CD8-positive, alpha-beta T cell (primary cell): ENCODE measurements at regions of chr7 and their contacts with region 1.

Region 1: GRCh38 chr7:50418086-50418515 is 32.0 kb downstream of the FIGNL1 start:
- DNase-seq: peak; percentile 43 to 85 (median 67)
- ATAC-seq: peak; percentile 97
- H3K4me3 ChIP-seq: no peak overlapping the region
- H3K4me3 Mint-ChIP-seq: no peak overlapping the region
- H3K27ac ChIP-seq: no peak overlapping the region
- H3K27ac Mint-ChIP-seq: no peak overlapping the region
- H3K4me1 ChIP-seq: peaks cover 20% of the 10 kb centered on the region
- H3K4me1 Mint-ChIP-seq: peaks cover 24% of the 10 kb centered on the region
- H3K27me3 ChIP-seq: no peaks in the 10 kb centered on the region
- H3K27me3 Mint-ChIP-seq: no peaks in the 10 kb centered on the region
- CTCF ChIP-seq: peak; percentile 73

Region 2: DNA sequence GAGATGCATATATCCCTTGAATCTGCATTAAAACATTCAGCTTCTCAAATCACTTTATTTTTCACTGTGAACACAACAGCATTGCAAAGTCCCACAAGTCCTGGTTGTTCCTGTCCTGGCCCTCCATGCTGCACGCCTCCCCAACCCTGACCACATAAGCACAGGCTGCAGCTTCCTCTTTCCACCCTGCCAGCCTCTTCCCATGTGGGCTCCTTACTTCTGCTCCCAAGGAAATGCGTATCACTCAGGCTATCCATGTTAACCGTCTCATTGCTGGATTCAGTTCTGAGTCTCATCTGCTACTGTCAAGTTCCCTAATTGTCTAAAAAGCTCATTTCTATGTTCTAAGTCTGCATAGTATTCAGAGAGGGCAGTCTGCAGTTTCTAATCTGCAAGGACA is 235.3 kb before region 1 on chr7:
- CTCF ChIA-PET with region 1: interaction called, 12 read pairs
- POLR2A ChIA-PET with region 1: no interaction called
- intact Hi-C with region 1: no loop called
- DNase-seq: no peak
- ATAC-seq: no peak
- H3K4me3 ChIP-seq: no peak overlapping the region
- H3K4me3 Mint-ChIP-seq: no peak overlapping the region
- H3K27ac ChIP-seq: no peak overlapping the region
- H3K27ac Mint-ChIP-seq: no peak overlapping the region
- H3K4me1 ChIP-seq: no peaks in the 10 kb centered on the region
- H3K4me1 Mint-ChIP-seq: peaks cover 5% of the 10 kb centered on the region
- H3K27me3 ChIP-seq: no peaks in the 10 kb centered on the region
- H3K27me3 Mint-ChIP-seq: no peaks in the 10 kb centered on the region
- CTCF ChIP-seq: no peak

Region 3: GRCh38 chr7:50317221-50317678 is 100.9 kb before region 1 on chr7:
- CTCF ChIA-PET with region 1: interaction called, 11 read pairs
- POLR2A ChIA-PET with region 1: no interaction called
- intact Hi-C with region 1: no loop called
- DNase-seq: peak in 4 of 9 experiments; percentile 54 to 93 (median 83)
- ATAC-seq: peak; percentile 72
- H3K4me3 ChIP-seq: peak overlapping the region; percentile 21 to 52
- H3K4me3 Mint-ChIP-seq: peak overlapping the region; percentile 26
- H3K27ac ChIP-seq: peak overlapping the region; percentile 91 to 96
- H3K27ac Mint-ChIP-seq: peak overlapping the region; percentile 96
- H3K4me1 ChIP-seq: peaks cover 98% of the 10 kb centered on the region
- H3K4me1 Mint-ChIP-seq: peaks cover 95% of the 10 kb centered on the region
- H3K27me3 ChIP-seq: no peaks in the 10 kb centered on the region
- H3K27me3 Mint-ChIP-seq: no peaks in the 10 kb centered on the region
- CTCF ChIP-seq: no peak

Region 4: GRCh38 chr7:50379082-50379481 is 39.0 kb before region 1 on chr7:
- CTCF ChIA-PET with region 1: interaction called, 91 read pairs
- POLR2A ChIA-PET with region 1: interaction called, 5 read pairs
- intact Hi-C with region 1: no loop called
- DNase-seq: no peak
- ATAC-seq: peak; percentile 25
- H3K4me3 ChIP-seq: no peak overlapping the region
- H3K4me3 Mint-ChIP-seq: peak overlapping the region; percentile 26
- H3K27ac ChIP-seq: peak overlapping the region in 1 of 2 experiments; percentile 24
- H3K27ac Mint-ChIP-seq: peak overlapping the region; percentile 86
- H3K4me1 ChIP-seq: peaks cover 79% of the 10 kb centered on the region
- H3K4me1 Mint-ChIP-seq: peaks cover 92% of the 10 kb centered on the region
- H3K27me3 ChIP-seq: no peaks in the 10 kb centered on the region
- H3K27me3 Mint-ChIP-seq: no peaks in the 10 kb centered on the region
- CTCF ChIP-seq: no peak

Region 5: DNA sequence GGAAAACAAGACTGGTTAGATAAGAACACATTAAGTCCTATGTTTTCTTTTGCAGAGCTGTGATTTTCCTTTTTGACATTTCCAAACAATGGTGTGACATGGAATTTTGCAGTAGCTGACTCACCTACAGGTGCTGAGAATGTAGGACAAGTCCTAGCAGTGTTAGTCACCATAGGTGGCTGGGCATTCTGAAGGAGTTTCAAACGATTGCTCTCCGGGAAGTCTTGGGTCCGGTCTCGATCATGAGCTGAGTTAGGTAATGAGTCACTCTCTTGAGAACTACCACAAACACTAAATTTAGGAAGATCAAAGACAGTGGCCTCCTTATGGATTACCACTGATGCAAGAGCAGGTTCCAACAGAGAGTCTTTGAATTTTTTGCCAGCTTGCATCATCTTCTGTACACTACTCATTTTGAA is 28.4 kb after region 1 on chr7:
- CTCF ChIA-PET with region 1: interaction called, 12 read pairs
- POLR2A ChIA-PET with region 1: interaction called, 3 read pairs
- intact Hi-C with region 1: no loop called
- DNase-seq: no peak
- ATAC-seq: no peak
- H3K4me3 ChIP-seq: no peak overlapping the region
- H3K4me3 Mint-ChIP-seq: no peak overlapping the region
- H3K27ac ChIP-seq: no peak overlapping the region
- H3K27ac Mint-ChIP-seq: no peak overlapping the region
- H3K4me1 ChIP-seq: peaks cover 18% of the 10 kb centered on the region
- H3K4me1 Mint-ChIP-seq: peaks cover 26% of the 10 kb centered on the region
- H3K27me3 ChIP-seq: no peaks in the 10 kb centered on the region
- H3K27me3 Mint-ChIP-seq: no peaks in the 10 kb centered on the region
- CTCF ChIP-seq: no peak